Aorta (tissue), 5 donors: ENCODE measurements at regions of chr16 and their contacts with region 1.

Region 1: GRCh38 chr16:8380311-8380710 is 210.0 kb downstream of the TMEM114 start:
- DNase-seq: no peak
- ATAC-seq: no peak
- H3K4me3 ChIP-seq: no peak overlapping the region
- H3K27ac ChIP-seq: no peak overlapping the region
- H3K4me1 ChIP-seq: no peaks in the 10 kb centered on the region
- H3K27me3 ChIP-seq: no peaks in the 10 kb centered on the region

Region 2: DNA sequence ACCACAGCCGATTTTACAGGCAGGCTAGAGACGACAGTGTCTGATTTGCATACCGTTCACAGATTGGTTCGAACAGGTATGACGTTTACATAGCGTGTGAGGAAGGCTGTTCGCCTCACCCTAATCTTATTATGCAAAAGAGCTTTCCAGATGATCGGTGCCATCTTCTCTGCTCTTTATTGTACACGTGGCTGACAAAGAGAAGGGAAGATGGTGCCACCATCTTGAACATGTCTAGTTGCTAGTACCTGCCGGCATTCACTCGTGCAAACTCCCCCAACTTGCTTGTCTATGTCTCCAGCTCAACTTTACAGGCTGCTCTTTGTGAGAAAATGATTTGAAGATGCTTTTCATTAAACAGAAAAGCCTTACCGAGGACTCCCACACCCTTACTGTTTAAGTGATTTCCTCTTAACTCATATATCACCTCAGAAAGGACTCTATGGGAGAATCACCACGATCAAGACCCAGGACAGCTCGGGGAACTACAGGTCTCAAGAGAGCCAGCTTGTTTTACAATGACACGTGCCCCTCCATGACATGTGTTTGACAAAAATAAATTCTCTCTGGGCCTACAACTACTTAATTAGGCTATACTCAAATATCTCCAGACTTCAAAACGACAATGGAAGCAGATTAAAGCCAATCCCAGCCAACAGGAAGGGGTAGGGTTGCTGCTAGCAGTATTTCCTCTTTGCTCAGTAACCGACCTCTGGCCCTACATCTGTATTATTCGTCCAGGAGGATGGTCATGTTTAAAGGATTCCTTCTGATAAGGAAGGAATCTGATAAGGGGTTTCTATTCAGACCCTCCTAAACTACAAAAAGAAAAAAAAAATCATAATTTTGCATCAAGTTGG is 270.6 kb before region 1 on chr16:
- intact Hi-C with region 1: no loop called
- DNase-seq: no peak
- ATAC-seq: no peak
- H3K4me3 ChIP-seq: no peak overlapping the region
- H3K27ac ChIP-seq: no peak overlapping the region
- H3K4me1 ChIP-seq: no peaks in the 10 kb centered on the region
- H3K27me3 ChIP-seq: no peaks in the 10 kb centered on the region

Region 3: DNA sequence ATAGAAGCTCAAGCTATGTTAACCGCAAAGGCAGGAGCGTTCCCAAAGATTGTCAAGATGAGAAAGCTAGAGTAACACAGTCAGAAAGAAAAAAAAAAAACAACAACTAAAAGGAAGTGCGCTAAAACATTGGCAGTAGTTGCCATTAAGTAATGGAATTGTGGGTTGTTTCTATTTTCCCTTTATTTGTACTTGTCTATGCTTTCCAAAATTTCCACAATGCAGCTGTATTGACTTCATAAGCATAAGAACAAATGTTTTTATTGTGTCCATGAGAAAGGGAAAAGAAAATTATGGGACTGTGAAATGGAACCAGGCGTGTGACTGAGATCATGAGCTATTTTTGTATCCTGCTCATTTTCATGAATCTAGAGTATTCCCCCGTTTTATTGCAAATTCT is 56.6 kb after region 1 on chr16:
- intact Hi-C with region 1: loop called in 1 of 2 experiments (anchors 10 kb)
- DNase-seq: no peak
- ATAC-seq: no peak
- H3K4me3 ChIP-seq: no peak overlapping the region
- H3K27ac ChIP-seq: no peak overlapping the region
- H3K4me1 ChIP-seq: no peaks in the 10 kb centered on the region
- H3K27me3 ChIP-seq: no peaks in the 10 kb centered on the region